ENCODE measurements at regions of chr11 and their contacts with region 1.

Region 1: DNA sequence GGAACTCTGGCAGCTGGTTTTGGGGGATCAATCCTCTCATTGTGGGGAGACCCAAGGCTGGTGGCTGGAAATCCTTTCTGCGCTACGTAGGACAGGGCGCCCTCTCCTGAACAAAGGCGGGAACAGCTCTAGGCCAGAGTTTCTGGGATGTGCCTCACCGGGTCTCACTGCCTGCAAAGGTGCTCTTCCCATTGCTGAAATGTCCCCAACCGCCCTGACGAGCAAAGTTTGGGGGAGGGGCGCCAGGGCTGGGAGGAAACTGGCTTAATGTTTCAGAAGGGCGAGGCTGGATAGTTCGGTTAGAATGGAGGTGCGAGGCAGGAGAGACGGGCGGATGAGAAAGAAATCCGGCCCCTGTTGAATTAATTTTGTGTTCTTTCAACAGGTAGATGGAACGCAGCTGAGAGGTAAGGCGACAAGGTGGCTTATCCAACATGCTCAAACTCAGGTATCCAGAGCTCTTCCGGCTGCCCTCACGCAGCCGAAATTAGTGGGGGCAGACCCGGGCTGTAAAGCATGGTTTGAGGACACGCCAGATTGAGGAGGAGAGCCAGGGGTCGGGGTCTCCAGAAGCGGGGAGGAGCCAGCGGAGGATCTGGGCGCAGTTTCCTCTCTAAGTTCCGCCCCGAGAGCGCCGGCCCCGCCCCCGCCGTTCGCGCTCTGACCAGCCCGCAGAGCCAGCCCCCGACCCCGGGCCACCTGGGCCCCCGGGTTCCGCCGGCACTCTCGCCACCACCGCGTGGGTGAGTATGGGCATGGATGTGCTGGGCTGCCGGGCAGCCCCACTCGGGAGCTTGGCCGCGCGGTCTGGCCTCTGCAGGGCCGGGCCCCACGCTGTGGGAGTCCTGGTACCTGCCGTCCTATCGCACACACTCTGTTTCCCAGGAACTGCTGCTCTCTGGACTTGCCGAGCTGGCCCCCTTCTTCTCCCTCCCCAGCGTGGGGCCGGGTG is at the start of gene PGAP2:
- DNase-seq: peak; percentile 67
- ATAC-seq: peak; percentile 85
- H3K4me3 Mint-ChIP-seq: peak within 1 kb of the TSS; percentile 94
- H3K27ac Mint-ChIP-seq: peak within 1 kb of the TSS; percentile 68
- H3K4me1 Mint-ChIP-seq: peaks cover 13% of the 10 kb centered on the region
- H3K27me3 Mint-ChIP-seq: no peaks in the 10 kb centered on the region
- CTCF ChIP-seq: no peak
- total RNA-seq, gene PGAP2: 19.7 and 25.0 TPM in 2 replicates

Region 2: GRCh38 chr11:3775736-3776406 is 32.3 kb before region 1 on chr11:
- CTCF ChIA-PET with region 1: no interaction called
- POLR2A ChIA-PET with region 1: no interaction called
- intact Hi-C with region 1: loop called (anchors 5 kb)
- DNase-seq: no peak
- ATAC-seq: no peak
- H3K4me3 Mint-ChIP-seq: no peak overlapping the region
- H3K27ac Mint-ChIP-seq: no peak overlapping the region
- H3K4me1 Mint-ChIP-seq: no peaks in the 10 kb centered on the region
- H3K27me3 Mint-ChIP-seq: no peaks in the 10 kb centered on the region
- CTCF ChIP-seq: no peak

Region 3: GRCh38 chr11:3781423-3781822 is 26.8 kb before region 1 on chr11:
- CTCF ChIA-PET with region 1: interaction called, 11 read pairs
- POLR2A ChIA-PET with region 1: interaction called, 12 read pairs
- intact Hi-C with region 1: loop called (anchors 2 kb)
- DNase-seq: no peak
- ATAC-seq: no peak
- H3K4me3 Mint-ChIP-seq: no peak overlapping the region
- H3K27ac Mint-ChIP-seq: peak overlapping the region; percentile 56
- H3K4me1 Mint-ChIP-seq: peaks cover 46% of the 10 kb centered on the region
- H3K27me3 Mint-ChIP-seq: no peaks in the 10 kb centered on the region
- CTCF ChIP-seq: no peak

Region 4: GRCh38 chr11:3786781-3787428 is 21.3 kb before region 1 on chr11:
- CTCF ChIA-PET with region 1: interaction called, 11 read pairs
- POLR2A ChIA-PET with region 1: interaction called, 12 read pairs
- intact Hi-C with region 1: loop called (anchors 2 kb)
- DNase-seq: no peak
- ATAC-seq: no peak
- H3K4me3 Mint-ChIP-seq: no peak overlapping the region
- H3K27ac Mint-ChIP-seq: peak overlapping the region; percentile 51
- H3K4me1 Mint-ChIP-seq: peaks cover 62% of the 10 kb centered on the region
- H3K27me3 Mint-ChIP-seq: no peaks in the 10 kb centered on the region
- CTCF ChIP-seq: no peak

Region 5: DNA sequence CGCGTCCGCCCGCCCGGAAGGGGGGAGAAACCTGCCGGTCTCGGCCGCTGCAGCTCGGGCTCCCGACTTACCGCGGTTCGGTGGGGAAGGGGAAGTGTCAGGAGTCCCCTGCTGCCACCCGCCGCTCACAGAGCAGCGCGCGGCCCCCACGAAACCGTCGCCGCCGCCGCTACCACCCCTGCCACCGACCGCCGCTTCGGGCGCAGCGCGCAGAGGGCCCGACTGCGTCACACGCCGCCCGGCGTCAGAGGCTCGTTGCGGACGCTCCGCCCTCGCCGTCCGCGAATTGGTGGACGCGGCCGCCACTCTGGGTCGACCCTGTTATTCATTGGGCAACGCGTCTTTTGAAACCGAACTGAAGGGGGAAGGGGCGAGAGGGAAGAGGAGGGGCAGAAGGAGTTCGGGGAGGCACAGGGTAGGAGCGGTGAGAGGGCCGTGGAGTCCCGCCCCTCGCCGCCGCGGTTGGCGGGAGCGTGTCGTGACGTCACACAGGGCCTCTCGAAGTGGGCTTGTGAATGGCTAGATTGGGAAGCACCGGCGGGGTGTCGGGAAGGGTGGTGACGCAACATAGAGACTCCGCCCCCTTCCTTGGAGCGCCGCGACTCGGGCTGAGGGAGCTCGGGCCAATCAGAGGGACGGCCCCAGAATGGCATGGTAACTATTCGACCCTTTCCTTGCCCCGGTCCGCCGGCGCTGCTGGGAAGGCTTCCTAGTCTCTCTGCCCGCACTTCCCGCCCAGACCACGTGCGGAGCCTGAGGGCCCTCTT is 10.7 kb before region 1 on chr11 and contains the start of gene NUP98:
- CTCF ChIA-PET with region 1: interaction called, 15 read pairs
- POLR2A ChIA-PET with region 1: interaction called, 26 read pairs
- intact Hi-C with region 1: loop called (anchors 1 kb)
- DNase-seq: peak; percentile 99
- ATAC-seq: peak; percentile 93
- H3K4me3 Mint-ChIP-seq: peak within 1 kb of the TSS; percentile 98
- H3K27ac Mint-ChIP-seq: peak within 1 kb of the TSS; percentile 99
- H3K4me1 Mint-ChIP-seq: peaks cover 43% of the 10 kb centered on the region
- H3K27me3 Mint-ChIP-seq: no peaks in the 10 kb centered on the region
- CTCF ChIP-seq: no peak
- total RNA-seq, gene NUP98: 98.0 and 117 TPM in 2 replicates

Region 6: DNA sequence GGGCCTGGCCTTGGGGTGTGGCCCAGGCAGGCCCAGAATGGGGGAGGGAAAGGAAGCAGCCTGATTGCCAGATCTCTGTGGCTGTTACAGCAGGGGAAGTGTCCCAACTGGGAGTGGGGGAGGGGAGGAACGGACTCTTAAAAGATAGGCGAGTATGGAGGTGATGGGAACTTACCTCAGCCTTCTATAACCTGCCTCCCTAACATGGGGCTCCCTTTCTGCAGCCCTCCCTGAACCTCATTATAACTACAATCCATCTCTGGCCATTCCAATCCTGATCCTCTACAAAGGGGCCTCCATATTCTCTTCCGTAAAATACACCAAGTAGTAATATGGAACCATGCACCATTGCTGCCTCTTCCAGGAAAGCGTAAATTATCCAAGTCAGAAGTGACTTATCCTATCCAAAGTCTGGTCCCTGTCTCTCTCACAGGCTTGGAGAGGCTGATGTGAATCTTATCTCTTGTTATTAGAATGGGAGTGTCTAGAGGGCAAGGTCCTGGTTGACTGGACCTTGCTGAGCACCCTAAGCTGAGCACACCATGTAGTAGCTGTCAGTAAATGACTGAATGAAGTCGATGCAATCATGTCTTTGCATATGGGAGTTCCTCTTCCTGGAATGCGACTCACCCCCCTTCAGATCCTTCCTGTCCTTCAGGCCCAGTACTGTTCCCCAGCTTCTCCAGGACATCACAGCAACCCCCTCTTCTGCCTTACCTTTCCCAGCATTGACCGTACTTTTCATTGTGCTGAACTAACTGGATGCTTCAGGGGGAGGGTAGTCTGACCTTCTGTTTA is 26.7 kb after region 1 on chr11:
- CTCF ChIA-PET with region 1: interaction called, 36 read pairs
- POLR2A ChIA-PET with region 1: interaction called, 46 read pairs
- intact Hi-C with region 1: no loop called
- DNase-seq: no peak
- ATAC-seq: no peak
- H3K4me3 Mint-ChIP-seq: peak overlapping the region; percentile 65
- H3K27ac Mint-ChIP-seq: peak overlapping the region; percentile 76
- H3K4me1 Mint-ChIP-seq: peaks cover 93% of the 10 kb centered on the region
- H3K27me3 Mint-ChIP-seq: no peaks in the 10 kb centered on the region
- CTCF ChIP-seq: no peak

Region 7: DNA sequence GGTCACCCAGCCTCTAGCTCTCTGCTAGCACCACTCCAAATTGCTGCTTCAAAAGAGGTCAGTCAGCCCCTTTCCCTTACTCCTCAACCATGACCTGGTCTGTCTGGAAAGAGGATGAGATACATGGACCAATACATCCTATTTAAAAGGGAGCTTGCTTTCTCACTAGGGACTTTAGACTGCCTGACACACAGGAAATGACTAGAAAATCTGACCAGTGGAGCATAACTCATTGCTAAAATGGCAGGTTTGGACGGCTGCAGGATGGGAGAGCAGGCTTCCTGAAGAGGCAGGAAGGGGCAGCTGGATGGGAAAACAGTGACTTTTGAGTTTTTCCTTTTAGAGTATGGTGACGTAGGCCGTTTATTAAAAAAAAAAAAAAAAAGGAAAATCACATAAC is 72.5 kb after region 1 on chr11:
- CTCF ChIA-PET with region 1: no interaction called
- POLR2A ChIA-PET with region 1: no interaction called
- intact Hi-C with region 1: no loop called
- DNase-seq: no peak
- ATAC-seq: peak; percentile 80
- H3K4me3 Mint-ChIP-seq: peak overlapping the region; percentile 60
- H3K27ac Mint-ChIP-seq: peak overlapping the region; percentile 87
- H3K4me1 Mint-ChIP-seq: peaks cover 85% of the 10 kb centered on the region
- H3K27me3 Mint-ChIP-seq: no peaks in the 10 kb centered on the region
- CTCF ChIP-seq: no peak

Measured in activated B cell treated with CpG ODN at 0.5 μM for 24 hours (primary cell).